Left ventricle myocardium superior (tissue), 1 donor: ENCODE measurements at regions of chr1 and their contacts with region 1.

Region 1: GRCh38 chr1:198088360-198089071 is 68.3 kb upstream of the NEK7 start:
- DNase-seq: no peak
- ATAC-seq: peak; percentile 41

Region 2: GRCh38 chr1:198363625-198364151 is 275.2 kb after region 1 on chr1:
- intact Hi-C with region 1: loop called (anchors 5 kb)
- DNase-seq: no peak
- ATAC-seq: no peak

Region 3: DNA sequence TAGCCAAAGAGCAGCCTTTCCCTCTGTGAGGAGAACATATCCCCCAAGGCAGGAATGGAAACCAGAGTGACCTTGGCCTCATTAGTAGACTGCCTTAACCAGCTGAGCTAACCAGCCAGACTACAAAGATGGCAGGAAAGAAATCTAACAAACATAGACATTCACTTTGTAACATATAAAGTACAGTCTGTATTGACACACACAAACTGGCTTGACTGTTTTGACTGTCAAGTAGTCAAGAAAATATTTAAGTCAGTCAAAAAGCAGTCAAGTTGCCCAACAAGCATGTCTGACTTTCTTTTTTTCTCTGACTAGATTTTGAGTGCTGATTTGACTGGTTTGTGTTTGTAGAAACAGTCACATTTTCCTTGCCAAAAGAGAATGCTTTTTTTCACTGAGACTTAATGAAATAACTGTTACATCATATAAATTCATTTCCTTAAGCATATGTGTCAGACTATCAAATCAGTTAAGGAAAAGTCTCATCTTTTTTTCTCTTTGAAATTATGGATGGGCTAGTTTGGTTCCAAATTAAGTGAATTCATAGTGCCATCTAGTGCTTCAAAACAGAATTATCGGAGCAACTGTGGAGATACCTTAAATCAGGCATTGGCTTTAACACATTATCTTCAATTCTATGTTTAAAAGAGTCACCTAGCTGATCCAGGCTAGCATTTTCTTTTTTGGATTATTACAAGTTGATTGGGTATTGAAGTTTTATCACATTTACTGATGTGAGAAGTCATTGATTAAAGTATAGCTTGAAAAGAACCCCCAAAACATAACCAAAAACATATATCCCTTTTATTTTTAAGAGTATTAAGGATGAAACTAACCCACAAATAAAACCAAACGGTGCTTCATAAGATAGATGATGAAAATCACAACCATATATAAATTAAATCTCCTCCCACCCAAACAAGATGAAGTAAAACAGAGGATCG is 377.0 kb after region 1 on chr1:
- intact Hi-C with region 1: loop called (anchors 5 kb)
- DNase-seq: no peak
- ATAC-seq: peak; percentile 39